Posterior vena cava (tissue), 2 donors: ENCODE measurements at regions of chr11 and their contacts with region 1.

Region 1: GRCh38 chr11:68880851-68881250 is 22.8 kb downstream of the MRPL21 start:
- DNase-seq: peak; percentile 17

Region 2: DNA sequence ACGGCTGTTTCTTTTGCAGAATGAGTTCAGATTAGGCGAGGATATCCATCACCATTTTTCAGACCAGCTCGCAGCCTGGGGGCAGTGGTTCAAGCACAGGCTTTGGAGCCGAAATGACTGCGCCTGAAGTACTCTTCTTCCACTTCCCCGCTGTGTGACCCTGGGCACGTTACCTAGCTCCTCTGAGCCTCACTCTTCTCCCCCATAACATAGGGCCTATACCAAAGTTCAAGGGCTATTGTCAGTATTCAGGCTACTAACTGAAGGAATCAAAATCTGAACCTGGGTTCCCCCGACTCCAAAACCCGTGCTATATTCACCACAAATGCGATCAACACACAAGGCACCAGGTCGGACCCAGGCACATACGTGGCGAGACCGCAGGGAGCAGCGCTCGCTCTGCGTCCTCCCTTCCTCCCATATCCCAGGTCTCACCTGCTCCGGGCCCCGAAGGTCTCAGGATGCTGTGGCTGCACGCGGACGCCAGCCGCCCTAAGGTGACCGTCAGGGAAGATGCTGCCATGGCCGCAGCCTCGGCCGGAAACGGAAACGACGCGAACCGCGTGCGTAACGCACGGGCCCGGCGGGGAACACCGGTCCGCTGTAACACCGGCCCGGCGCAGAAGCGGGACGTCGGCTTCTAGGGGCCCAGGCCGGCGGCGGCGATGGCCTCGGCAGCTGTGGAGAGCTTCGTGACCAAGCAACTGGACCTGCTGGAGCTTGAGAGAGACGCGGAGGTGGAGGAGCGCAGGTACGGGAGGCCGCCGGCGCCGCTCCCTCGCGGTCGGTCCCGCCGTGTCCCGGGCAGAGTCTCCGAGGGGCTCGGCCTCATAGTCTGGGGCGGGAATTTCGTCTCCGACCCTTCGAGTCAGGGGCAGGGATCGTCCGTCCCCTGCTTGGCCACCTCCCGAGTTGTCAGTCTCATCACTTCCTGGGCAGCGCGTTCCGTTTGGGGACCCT is 22.7 kb after region 1 on chr11 and contains the starts of genes IGHMBP2 and MRPL21:
- intact Hi-C with region 1: loop called in 1 of 2 experiments (anchors 1 kb)
- DNase-seq: peak; percentile 97
- total RNA-seq, gene IGHMBP2: 18.3 to 18.4 TPM
- total RNA-seq, gene MRPL21: 44.9 to 47.5 TPM